ENCODE measurements at regions of chr1 and their contacts with region 1.

Region 1: GRCh38 chr1:166910396-166910994 is 34.4 kb upstream of the TADA1 start:
- DNase-seq: peak; percentile 42 to 92 (median 80)

Region 2: DNA sequence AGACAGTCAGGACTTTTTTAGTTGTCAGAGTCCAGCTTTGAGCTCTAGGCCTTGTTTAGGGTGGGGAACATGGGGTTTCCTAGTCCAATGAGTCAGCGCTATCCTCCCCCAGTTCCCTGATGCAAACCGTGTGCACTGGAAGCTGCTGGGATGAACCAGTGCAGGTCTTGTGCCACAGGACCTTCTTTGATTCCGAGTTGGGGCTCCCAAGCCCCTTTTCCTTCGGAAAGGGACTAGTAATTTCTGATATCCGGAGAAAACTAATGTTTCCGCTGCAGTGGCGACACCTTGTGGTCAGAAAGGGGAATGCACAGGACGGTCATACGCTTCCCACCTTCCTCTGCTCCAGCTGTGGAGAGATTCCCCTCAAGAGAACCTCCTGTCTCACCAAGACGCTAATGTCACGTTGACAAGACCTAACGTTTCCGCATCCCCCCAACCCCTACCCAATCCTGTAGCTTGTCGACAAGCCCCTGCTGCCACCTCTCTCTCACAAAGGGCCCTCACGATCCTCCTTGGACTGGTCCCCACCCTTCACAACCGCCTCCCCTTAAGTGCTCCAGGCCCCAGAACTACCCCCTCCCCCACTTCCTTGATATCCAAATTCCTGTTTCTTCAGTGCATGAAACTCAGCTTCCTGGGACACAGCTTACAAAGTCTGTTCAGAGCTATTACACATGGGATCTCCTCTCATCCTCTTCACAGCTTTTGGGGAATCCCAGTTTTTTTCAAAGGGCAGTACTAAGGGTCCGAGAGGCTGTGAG is 148.7 kb after region 1 on chr1:
- intact Hi-C with region 1: loop called (anchors 2 kb)
- DNase-seq: peak in 41 of 42 donors; percentile 49 to 95 (median 83)

Region 3: DNA sequence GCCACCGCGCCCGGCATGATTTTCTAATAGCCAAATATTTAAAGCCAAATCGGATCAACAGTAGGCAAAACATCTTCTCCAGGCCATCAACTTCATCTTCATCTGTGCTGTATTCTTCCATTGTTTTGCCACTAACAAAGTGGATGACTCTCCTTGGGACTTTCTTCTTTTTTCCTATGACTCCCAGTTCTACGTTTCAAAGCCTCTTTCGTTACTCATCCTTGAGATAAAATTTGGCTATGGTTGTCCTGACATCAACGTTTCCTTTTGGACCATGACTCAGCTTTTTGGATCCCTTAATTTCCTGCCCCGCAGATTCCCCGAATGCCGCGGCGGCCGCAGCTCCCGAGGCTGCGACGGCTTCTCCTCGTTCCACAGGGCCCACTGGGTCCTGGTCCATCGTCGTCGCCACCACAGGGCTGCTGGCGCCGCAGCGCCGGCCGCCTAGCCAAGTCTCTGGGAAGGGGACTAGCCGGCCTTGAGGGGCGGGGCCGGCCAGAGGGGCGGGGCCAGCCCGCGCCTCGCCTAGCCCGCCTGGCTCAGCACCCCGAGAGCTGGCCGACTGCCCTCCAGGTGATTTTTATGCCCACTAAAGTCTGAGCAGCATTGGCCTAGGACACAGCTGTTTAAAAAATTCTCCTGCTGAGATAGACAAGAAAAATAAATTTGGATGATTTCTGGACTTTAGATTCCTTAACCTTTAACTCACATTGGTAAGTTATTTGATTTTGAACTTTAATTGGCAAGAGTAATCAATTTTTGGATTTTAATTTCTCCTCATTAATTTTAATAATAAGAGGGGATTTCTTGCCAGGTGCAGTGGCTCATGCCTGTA is 909.6 kb after region 1 on chr1:
- intact Hi-C with region 1: no loop called
- DNase-seq: peak; percentile 4 to 71 (median 42)